ENCODE measurements at regions of chr14 and their contacts with region 1.

Region 1: DNA sequence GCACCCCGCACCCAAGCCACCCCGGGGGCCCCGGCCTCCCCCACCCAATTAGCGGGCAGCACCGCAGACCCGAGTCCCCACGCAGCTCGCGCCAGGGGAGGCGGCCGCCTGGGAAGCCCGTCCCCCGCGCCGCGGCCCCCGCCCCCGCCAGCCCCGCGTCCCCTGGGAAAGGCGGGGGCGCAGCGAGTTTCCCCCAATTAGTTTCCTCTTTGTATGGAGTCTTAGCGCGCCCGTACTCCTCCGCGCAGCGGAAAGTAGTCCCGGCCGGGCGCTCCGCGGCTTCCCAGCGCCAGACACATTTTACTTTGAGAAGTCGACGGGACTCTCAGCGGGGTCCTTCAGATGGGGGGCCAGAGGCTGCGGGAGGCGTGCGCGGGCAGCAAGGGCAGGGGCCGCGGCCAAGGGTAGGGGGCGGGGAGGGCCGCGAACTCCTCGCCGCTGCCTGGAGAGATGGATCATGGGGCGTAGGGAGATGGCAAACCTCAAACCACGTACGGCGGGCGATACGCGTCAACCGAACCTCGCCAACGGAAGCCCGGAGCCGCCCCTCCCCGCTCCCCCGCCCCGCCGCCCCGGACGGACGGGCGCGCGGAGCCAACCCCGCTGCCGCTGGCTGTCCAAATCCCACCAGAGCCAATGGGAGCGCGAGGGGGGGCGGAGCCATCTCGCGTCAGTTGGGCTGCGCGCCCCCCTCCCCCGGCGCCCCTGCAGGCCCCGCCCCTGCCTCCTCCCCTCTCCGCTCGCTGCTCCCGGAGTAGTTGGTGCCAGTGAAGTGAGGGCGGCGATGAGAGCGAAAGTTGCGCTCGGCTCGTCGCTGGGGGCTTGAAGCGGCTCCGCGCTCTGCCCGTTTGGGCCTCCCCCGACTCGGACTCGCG is at the start of gene RCOR1:
- DNase-seq: peak; percentile 95 to 97
- ATAC-seq: peak; percentile 82 to 87
- H3K4me3 ChIP-seq: peak within 1 kb of the TSS; percentile 81 to 100 (median 92)
- H3K27ac ChIP-seq: peak within 1 kb of the TSS; percentile 92 to 100 (median 96)
- H3K4me1 ChIP-seq: peaks cover 24 to 30% of the 10 kb centered on the region in 2 donors
- H3K27me3 ChIP-seq: no peaks in the 10 kb centered on the region
- CTCF ChIP-seq: no peak
- POLR2A ChIP-seq: peak; percentile 69 to 80
- total RNA-seq, gene RCOR1: 10.0 to 14.2 (median 12.1) TPM

Region 2: GRCh38 chr14:102171177-102172020 is 420.7 kb before region 1 on chr14:
- in situ Hi-C with region 1: no loop called
- intact Hi-C with region 1: no loop called
- DNase-seq: no peak
- ATAC-seq: no peak
- H3K4me3 ChIP-seq: no peak overlapping the region
- H3K27ac ChIP-seq: no peak overlapping the region
- H3K4me1 ChIP-seq: peaks cover 16 to 17% of the 10 kb centered on the region in 2 donors
- H3K27me3 ChIP-seq: no peaks in the 10 kb centered on the region
- CTCF ChIP-seq: no peak
- POLR2A ChIP-seq: no peak

Region 3: GRCh38 chr14:102362545-102363181 is 229.5 kb before region 1 on chr14 and contains the starts of genes CINP and TECPR2:
- in situ Hi-C with region 1: no loop called
- intact Hi-C with region 1: loop called (anchors 5 kb)
- DNase-seq: peak; percentile 97 to 98
- ATAC-seq: peak; percentile 91 to 93
- H3K4me3 ChIP-seq: peak within 1 kb of the TSS; percentile 70 to 97 (median 86)
- H3K27ac ChIP-seq: peak within 1 kb of the TSS; percentile 88 to 99 (median 97)
- H3K4me1 ChIP-seq: peaks cover 24 to 32% of the 10 kb centered on the region in 2 donors
- H3K27me3 ChIP-seq: no peaks in the 10 kb centered on the region
- CTCF ChIP-seq: no peak
- POLR2A ChIP-seq: peak; percentile 90 to 94
- total RNA-seq, gene CINP: 19.2 to 25.1 (median 21.5) TPM
- total RNA-seq, gene TECPR2: 10.0 to 45.0 (median 20.2) TPM

Region 4: GRCh38 chr14:102437997-102438915 is 153.9 kb before region 1 on chr14:
- in situ Hi-C with region 1: no loop called
- intact Hi-C with region 1: loop called (anchors 5 kb)
- DNase-seq: peak; percentile 71 to 86
- ATAC-seq: peak; percentile 40 to 51
- H3K4me3 ChIP-seq: peak overlapping the region; percentile 18 to 40 (median 32)
- H3K27ac ChIP-seq: peak overlapping the region; percentile 29 to 62 (median 48)
- H3K4me1 ChIP-seq: peaks cover 23 to 27% of the 10 kb centered on the region in 2 donors
- H3K27me3 ChIP-seq: no peaks in the 10 kb centered on the region
- CTCF ChIP-seq: peak; percentile 76 to 91 (median 83)
- POLR2A ChIP-seq: no peak

Region 5: DNA sequence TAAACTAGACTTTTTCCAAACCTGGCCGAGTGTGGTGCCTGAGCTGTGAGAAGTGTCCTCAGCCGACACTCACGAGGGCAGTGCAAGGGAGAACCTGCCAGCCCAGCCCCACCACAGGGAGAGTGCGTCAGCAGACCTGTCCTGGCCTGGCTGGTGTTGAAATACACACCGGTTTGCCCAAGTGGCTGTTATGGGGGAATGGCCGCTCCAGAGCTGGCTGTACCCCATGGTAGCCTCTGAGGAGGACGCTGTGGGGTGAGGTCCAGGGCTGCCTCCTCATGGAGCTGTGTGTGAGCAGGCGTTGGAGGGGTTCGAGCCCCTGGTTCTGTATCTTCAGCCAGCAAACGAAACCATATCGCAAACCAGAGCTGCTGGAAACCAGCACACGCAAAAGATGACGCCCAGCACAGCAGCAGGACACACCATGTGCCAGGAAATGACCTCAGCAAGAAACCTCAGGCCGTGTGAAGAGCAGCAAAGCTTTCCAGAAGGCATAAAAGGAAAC is 91.9 kb before region 1 on chr14:
- in situ Hi-C with region 1: no loop called
- intact Hi-C with region 1: no loop called
- DNase-seq: peak; percentile 95 to 97
- ATAC-seq: peak; percentile 71 to 82
- H3K4me3 ChIP-seq: peak overlapping the region; percentile 25 to 48 (median 34)
- H3K27ac ChIP-seq: peak overlapping the region; percentile 95 to 99 (median 96)
- H3K4me1 ChIP-seq: peaks cover 59 to 69% of the 10 kb centered on the region in 2 donors
- H3K27me3 ChIP-seq: no peaks in the 10 kb centered on the region
- CTCF ChIP-seq: peak in 1 of 5 experiments; percentile 8
- POLR2A ChIP-seq: peak; percentile 25 to 47

Region 6: DNA sequence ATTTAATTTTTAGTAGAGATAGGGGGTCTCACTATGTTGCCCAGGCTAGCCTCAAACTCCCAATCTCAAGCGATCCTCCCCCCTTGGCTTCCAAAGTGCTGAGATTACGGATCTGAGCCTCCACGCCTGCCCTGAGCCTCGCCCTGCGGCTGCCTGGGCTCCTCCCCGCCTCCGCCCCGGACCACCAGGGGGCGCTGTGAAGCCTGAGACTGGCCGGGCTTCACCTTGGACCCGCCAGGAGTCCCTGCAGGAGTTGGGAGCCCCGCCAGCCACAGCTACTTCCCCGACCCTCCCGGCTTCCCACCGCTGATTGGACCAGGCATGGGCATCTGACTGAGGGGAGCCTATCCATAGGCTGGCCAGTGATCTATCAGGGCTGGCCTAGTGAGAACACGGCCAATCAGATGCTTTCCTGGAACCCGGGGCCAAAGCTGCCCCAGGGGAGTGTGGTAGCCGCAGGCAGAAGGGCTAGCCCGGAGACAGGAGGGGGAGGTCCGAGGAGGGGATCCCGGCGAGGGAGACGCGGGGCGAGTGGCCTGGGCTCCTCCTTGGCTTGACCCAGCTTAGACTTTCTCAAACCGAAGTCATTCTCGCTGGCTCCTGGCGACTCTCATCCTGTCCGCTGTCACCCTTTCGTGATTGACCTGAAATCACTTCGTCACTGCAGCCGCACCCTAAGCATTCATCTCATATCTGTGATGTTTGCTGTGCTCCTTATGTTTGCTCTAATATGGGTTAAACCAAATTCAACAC is 67.5 kb before region 1 on chr14:
- in situ Hi-C with region 1: no loop called
- intact Hi-C with region 1: loop called (anchors 2 kb)
- DNase-seq: peak; percentile 93 to 96
- ATAC-seq: peak; percentile 94 to 95
- H3K4me3 ChIP-seq: peak overlapping the region; percentile 69 to 77 (median 72)
- H3K27ac ChIP-seq: peak overlapping the region; percentile 68 to 78 (median 75)
- H3K4me1 ChIP-seq: peaks cover 11 to 12% of the 10 kb centered on the region in 2 donors
- H3K27me3 ChIP-seq: no peaks in the 10 kb centered on the region
- CTCF ChIP-seq: peak; percentile 94 to 97 (median 95)
- POLR2A ChIP-seq: peak in 1 of 2 donors; percentile 16

Region 7: DNA sequence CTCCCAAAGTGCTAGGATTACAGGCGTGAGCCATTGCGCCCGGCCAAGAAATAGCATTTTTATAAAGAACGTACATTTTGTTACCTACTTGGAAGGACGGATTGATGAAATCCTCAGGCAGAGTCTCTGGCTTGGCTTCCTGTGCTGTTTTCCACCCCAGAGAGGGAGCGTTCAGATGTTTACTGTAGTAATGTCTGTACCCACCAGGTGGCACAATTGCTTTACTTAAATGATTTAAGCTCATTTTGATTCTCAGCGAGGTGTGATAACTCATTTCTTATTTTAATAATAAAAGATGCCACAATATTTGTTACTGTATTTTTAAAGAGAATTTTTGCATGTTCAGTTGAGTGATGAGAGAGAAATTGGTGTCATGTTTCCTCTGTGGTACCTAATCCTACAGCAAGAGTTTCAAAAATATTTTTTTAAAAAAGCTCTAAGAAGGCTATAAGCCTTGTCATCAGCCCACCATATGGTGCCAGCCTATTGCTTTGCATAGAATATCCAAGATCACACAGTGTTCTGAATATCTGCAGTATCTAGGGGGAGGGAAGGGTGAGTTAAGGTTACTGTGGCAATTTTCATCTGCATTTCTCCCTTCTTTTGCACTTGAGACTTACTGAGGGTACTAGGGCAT is 102.5 kb after region 1 on chr14:
- in situ Hi-C with region 1: no loop called
- intact Hi-C with region 1: loop called (anchors 5 kb)
- DNase-seq: peak; percentile 40 to 41
- ATAC-seq: peak; percentile 46 to 75
- H3K4me3 ChIP-seq: no peak overlapping the region
- H3K27ac ChIP-seq: no peak overlapping the region
- H3K4me1 ChIP-seq: peaks cover 49 to 51% of the 10 kb centered on the region in 2 donors
- H3K27me3 ChIP-seq: no peaks in the 10 kb centered on the region
- CTCF ChIP-seq: peak; percentile 55 to 75 (median 68)
- POLR2A ChIP-seq: no peak

Region 8: GRCh38 chr14:102774391-102775153 is 182.4 kb after region 1 on chr14:
- in situ Hi-C with region 1: no loop called
- intact Hi-C with region 1: loop called (anchors 5 kb)
- DNase-seq: peak; percentile 33 to 43
- ATAC-seq: peak; percentile 37 to 52
- H3K4me3 ChIP-seq: no peak overlapping the region
- H3K27ac ChIP-seq: no peak overlapping the region
- H3K4me1 ChIP-seq: peaks cover 5 to 6% of the 10 kb centered on the region in 2 donors
- H3K27me3 ChIP-seq: no peaks in the 10 kb centered on the region
- CTCF ChIP-seq: peak; percentile 33 to 70 (median 53)
- POLR2A ChIP-seq: no peak

Measured in gastrocnemius medialis (tissue), 4 donors.